Heart right ventricle (tissue), 16 donors: ENCODE measurements at regions of chr11 and their contacts with region 1.

Region 1: GRCh38 chr11:34997952-34998528 is 81.6 kb downstream of the PDHX start:
- DNase-seq: no peak
- ATAC-seq: peak in 3 of 8 donors; percentile 34 to 56 (median 43)
- H3K4me3 ChIP-seq: no peak overlapping the region
- H3K27ac ChIP-seq: peak overlapping the region in 1 of 10 donors; percentile 7
- H3K4me1 ChIP-seq: peaks cover 0 to 24% (median 0%) of the 10 kb centered on the region in 9 donors
- H3K27me3 ChIP-seq: no peaks in the 10 kb centered on the region
- CTCF ChIP-seq: peak; percentile 4 to 73 (median 55)

Region 2: GRCh38 chr11:35232891-35233330 is 234.9 kb after region 1 on chr11:
- intact Hi-C with region 1: loop called in 6 of 10 experiments (anchors 5 to 10 kb)
- DNase-seq: no peak
- ATAC-seq: no peak
- H3K4me3 ChIP-seq: no peak overlapping the region
- H3K27ac ChIP-seq: peak overlapping the region in 1 of 10 donors; percentile 27
- H3K4me1 ChIP-seq: peaks cover 0 to 26% (median 0%) of the 10 kb centered on the region in 9 donors
- H3K27me3 ChIP-seq: no peaks in the 10 kb centered on the region
- CTCF ChIP-seq: no peak

Region 3: GRCh38 chr11:35237860-35238715 is 240.0 kb after region 1 on chr11:
- intact Hi-C with region 1: loop called in 8 of 10 experiments (anchors 5 to 10 kb)
- DNase-seq: peak in 1 of 2 donors; percentile 62
- ATAC-seq: peak in 4 of 8 donors; percentile 28 to 72 (median 48)
- H3K4me3 ChIP-seq: no peak overlapping the region
- H3K27ac ChIP-seq: peak overlapping the region in 1 of 10 donors; percentile 77
- H3K4me1 ChIP-seq: peaks cover 0 to 43% (median 0%) of the 10 kb centered on the region in 9 donors
- H3K27me3 ChIP-seq: no peaks in the 10 kb centered on the region
- CTCF ChIP-seq: peak; percentile 60 to 84 (median 75)

Region 4: GRCh38 chr11:35246745-35247144 is 248.7 kb after region 1 on chr11:
- intact Hi-C with region 1: loop called in 2 of 10 experiments (anchors 5 to 10 kb)
- DNase-seq: peak in 1 of 2 donors; percentile 60
- ATAC-seq: peak; percentile 55 to 96 (median 92)
- H3K4me3 ChIP-seq: no peak overlapping the region
- H3K27ac ChIP-seq: peak overlapping the region; percentile 8 to 88 (median 72)
- H3K4me1 ChIP-seq: peaks cover 0 to 34% (median 10%) of the 10 kb centered on the region in 9 donors
- H3K27me3 ChIP-seq: no peaks in the 10 kb centered on the region
- CTCF ChIP-seq: no peak